Activated naive CD4-positive, alpha-beta T cell treated with anti-CD3 and anti-CD28 coated beads, Interleukin-2, amount 10 ng/mL, durations not matched to agents 7 days and 5 days (primary cell): ENCODE measurements at regions of chr2 and their contacts with region 1.

Region 1: DNA sequence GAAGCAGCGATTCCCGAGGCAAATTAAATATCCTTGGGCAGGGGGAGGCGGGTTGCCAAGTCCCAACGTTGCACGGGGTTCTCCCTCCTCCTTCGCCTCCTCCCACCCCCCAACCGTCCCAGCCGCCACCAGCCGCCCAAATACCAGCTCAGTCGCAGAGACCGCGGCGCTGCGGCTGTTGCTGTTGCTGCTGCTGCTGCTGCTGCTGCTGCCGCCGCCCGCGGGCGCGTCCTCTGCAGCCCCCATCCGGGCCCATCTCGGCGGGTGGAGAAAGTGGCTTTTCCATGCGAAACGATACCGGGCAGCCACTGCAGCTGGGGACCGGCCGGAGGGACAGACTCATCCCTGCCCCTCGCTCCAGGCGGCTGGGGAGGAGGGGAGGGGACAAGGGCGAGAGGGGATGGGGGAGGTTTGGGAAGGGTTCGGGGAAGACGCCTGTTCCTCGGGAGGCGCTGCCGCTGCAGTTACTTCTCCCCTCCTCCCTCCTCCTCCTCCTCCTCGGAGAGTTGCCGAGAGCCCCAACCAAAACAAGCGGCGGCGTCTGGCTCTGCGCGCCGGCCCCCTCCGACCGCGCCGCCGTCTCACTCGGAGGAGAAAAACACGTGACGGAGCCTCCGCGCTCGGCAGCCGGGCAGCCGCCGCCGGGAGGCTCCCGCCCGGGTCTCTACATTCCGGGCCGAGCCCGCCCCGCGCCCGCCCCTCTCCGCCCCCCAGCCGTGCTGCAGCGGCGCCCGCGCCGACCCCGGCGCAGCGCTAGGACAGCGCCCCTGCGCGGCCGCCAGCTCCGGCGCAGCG is at the start of gene IRS1:
- DNase-seq: peak; percentile 77
- H3K4me3 Mint-ChIP-seq: peak within 1 kb of the TSS; percentile 85
- H3K27ac Mint-ChIP-seq: peak within 1 kb of the TSS; percentile 89
- H3K4me1 Mint-ChIP-seq: peaks cover 51% of the 10 kb centered on the region
- H3K27me3 Mint-ChIP-seq: peaks cover 4% of the 10 kb centered on the region

Region 2: DNA sequence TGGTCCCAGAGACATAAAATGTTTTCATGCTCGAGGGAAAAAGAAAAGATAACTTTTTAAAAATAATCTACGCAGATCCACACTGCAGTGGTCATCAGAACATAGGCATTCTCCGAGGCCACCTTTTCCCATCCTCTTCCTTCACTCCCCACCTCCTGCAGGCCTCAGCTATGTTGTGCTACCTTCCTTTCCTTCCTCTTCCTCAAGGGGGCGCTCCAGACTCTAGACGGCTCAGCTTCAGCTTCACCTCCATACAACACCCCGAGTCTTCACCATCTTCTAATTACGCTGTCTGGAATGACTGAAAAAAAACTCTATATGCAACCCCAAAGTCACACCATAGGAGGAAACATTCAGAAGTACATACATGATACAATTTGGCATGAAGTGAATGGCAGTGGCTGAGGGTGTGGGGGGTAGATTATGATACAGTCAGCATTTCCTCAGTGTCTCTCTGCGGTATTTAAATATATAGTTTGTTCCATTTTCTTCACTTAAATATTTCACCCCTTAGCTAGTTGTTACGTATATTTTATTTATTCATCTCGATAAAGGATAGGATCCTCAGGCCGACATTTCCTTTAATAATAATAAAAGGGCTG is 583.4 kb before region 1 on chr2:
- CTCF ChIA-PET with region 1: interaction called, 31 read pairs
- DNase-seq: peak; percentile 77
- H3K4me3 Mint-ChIP-seq: no peak overlapping the region
- H3K27ac Mint-ChIP-seq: no peak overlapping the region
- H3K4me1 Mint-ChIP-seq: no peaks in the 10 kb centered on the region
- H3K27me3 Mint-ChIP-seq: no peaks in the 10 kb centered on the region

Region 3: GRCh38 chr2:226813148-226813701 is 13.8 kb after region 1 on chr2:
- CTCF ChIA-PET with region 1: interaction called, 10 read pairs
- DNase-seq: no peak
- H3K4me3 Mint-ChIP-seq: no peak overlapping the region
- H3K27ac Mint-ChIP-seq: no peak overlapping the region
- H3K4me1 Mint-ChIP-seq: no peaks in the 10 kb centered on the region
- H3K27me3 Mint-ChIP-seq: peaks cover 9% of the 10 kb centered on the region

Region 4: DNA sequence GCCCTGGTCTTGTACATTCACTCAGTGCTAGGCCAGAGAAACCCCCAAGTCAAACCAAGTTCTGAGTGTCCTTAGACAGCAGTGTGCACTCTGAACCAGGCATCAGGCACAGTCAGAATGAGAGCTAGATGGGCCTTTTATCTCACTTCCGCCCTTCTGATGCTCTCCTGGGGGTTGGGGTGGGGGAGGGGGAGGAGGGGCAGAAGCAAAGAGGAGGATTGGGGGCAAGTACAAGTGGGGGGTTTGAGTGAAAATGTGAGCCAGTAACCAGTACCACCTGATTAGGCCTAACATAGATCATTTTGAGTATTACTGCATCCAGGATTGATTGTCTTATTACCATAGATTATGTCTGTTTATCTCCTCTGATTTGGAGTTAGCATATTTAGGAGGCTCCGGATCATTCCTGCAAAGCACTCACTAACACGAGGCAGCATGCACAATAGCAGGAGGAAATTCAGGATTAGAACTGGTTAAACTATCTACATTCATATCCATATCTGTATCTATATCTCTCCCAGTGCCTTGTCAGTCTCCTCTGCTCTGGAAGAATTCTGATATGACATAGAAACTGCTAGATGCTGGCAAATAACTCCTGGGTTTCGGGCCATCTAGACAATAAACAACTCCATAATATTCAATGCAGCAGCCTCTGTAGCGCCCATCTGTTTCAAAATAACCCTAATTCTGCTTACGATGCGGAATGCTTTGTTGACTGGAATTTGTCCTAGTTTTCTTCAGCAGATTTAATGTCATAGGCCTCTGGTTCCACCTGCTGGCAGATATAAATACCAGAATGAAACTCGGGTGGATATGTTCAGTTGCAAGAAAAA is 185.6 kb after region 1 on chr2:
- CTCF ChIA-PET with region 1: interaction called, 53 read pairs
- DNase-seq: peak; percentile 42
- H3K4me3 Mint-ChIP-seq: no peak overlapping the region
- H3K27ac Mint-ChIP-seq: no peak overlapping the region
- H3K4me1 Mint-ChIP-seq: peaks cover 28% of the 10 kb centered on the region
- H3K27me3 Mint-ChIP-seq: no peaks in the 10 kb centered on the region